H1 (cell line): ENCODE measurements at regions of chr12 and their contacts with region 1.

Region 1: DNA sequence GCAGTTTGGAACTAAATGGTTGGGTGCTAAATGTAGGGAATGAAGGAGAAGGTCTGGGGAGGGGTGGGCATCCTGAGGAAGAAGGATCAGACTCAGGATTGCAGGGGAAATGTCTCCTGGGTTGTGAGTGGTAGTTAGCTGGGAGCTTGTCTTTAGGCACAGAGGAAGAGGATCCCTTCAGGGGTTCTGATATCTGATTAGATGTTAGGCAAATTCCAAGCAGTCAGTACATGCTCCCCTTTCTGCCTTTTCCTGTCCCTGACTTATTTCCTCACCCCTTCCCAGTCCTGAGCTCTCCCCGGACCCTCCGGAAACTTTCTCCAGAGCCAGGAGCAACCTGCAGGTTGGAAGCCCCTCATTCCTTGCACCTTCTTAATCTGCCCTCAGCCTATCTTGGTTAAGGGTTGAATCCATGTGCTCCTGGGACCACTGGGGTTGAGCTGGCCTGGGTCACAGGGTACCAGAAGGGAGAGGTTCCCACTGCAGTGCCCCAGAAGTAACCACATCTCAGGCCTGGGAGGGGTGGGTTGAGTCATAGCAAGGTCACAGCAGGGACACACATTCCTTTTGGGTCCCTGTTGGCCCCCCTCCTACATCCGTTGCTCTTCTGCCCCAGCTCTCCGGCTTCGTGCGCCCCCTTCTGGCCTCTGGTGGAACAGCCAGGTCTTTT is 1.6 kb downstream of the IGFBP6 start:
- DNase-seq: peak; percentile 65 to 97
- H3K4me3 ChIP-seq: peak overlapping the region in 2 of 4 experiments; percentile 5 to 85; a peak in 3 of 8 replicates
- H3K27ac ChIP-seq: no peak overlapping the region
- H3K4me1 ChIP-seq: peaks cover 4 to 21% (median 7%) of the 10 kb centered on the region in 4 experiments
- H3K27me3 ChIP-seq: peaks cover 0 to 25% (median 15%) of the 10 kb centered on the region in 4 experiments; a peak in 5 of 7 replicates
- CTCF ChIP-seq: peak; percentile 82 to 87 (median 86)
- EP300 ChIP-seq: no peak
- POLR2A ChIP-seq: no peak
- RAD21 ChIP-seq: peak; percentile 79 to 81

Region 2: DNA sequence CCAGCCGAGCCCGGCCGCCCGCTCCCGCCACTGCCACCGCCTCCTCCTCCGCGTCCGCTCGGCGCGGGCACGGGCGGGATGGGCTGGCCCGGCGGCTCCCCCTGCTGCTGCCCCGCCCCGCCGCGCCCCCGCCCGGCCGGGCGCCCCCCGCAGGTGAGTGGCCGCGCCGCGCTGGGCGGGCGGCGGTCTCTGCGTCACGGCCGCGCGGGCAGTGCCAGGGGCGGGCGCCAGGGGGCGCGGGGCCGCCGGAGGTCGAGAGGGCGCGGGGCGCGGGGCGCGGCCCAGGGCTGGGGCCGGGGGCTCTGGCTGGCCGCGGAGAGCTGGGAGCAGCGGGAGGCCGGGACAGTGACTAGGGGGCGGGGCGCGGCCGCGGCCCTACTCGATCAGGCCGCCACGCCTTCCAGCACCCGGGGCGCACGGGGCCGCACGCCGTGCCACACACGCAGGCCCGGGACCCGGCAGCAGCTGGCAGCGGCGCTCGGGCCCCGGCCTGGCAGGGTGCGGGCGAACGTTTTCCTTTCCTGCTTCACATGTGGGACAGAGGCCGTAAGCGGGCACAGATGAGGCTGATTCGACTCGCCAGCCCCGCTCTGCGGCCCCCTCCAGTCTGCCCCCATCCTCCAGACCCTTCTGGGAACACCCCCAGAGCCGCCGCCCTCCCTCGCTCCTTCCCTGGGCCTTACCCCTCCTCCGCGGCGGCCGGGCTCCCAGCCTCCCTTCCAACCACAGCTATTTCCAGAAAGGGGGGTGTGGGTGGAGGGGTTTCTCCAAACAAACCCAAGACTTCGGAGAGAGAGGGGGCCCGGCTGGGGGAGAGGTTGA is 51.7 kb before region 1 on chr12:
- CTCF ChIA-PET with region 1: interaction called, 42 read pairs
- POLR2A ChIA-PET with region 1: interaction called, 5 read pairs
- DNase-seq: peak in 1 of 2 experiments; percentile 83
- H3K4me3 ChIP-seq: peak overlapping the region; percentile 34 to 94 (median 50); a peak in 6 of 8 replicates
- H3K27ac ChIP-seq: no peak overlapping the region
- H3K4me1 ChIP-seq: peaks cover 29 to 75% (median 53%) of the 10 kb centered on the region in 4 experiments
- H3K27me3 ChIP-seq: peaks cover 0 to 20% (median 17%) of the 10 kb centered on the region in 4 experiments; a peak in 6 of 7 replicates
- CTCF ChIP-seq: peak in 2 of 3 experiments; percentile 20 to 48; a peak in 3 of 4 replicates
- EP300 ChIP-seq: no peak
- POLR2A ChIP-seq: no peak
- RAD21 ChIP-seq: 0 out of 4 replicates have a peak, but pooled peaks of 1 of the 2 experiments have one; percentile 6

Region 3: DNA sequence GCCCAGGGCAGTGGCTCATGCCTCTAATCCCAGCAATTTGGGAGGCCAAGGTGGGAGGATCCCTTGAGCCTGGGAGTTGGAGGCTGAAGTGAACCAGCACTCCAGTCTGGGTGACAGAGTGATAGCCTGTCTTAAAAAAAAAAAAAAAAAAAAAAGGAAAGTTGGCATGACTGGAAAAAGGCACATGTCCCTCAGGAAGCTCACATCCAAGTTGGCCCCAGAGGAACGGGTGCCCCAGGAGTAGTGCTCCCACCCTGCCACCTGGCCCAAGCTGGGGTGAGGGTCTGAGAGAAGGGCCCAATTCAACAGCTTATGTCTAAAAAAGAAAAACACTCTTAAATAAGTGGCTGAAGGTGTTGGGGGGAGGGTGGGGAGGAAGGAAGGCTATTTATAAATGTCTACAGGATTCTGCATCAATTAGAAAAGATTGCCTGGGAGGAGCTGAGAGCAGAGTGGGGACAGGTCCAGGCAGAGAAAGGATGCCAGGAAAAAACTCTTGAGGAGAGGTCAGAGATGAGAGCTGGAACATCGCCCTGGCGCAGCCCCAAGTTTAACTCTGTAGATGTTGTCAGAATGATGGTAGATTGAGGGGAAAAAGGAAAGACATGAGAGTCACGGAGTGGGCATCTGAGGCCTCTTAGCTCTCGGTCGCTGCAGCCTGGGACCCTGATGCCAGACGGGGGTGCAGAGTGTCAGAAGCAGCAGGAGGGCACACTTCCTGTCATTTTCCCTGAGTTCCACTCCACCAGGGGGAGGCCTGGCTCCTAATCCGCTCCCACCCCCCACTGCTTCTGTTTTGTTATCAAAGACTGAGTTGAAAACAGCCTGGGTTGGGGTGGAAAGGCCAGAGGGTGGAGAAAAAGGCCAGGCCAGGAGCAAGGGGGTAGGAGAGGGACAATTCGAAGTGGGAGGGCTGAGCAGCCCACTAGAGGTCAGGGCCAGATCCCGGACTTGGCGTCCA is 27.2 kb before region 1 on chr12:
- CTCF ChIA-PET with region 1: interaction called, 531 read pairs
- POLR2A ChIA-PET with region 1: interaction called, 11 read pairs
- DNase-seq: no peak
- H3K4me3 ChIP-seq: no peak overlapping the region
- H3K27ac ChIP-seq: no peak overlapping the region
- H3K4me1 ChIP-seq: peaks cover 4 to 16% (median 10%) of the 10 kb centered on the region in 4 experiments
- H3K27me3 ChIP-seq: peaks cover 0 to 2% (median under 1%) of the 10 kb centered on the region in 4 experiments; a peak in 2 of 7 replicates
- CTCF ChIP-seq: peak in 2 of 3 experiments; percentile 7 to 9; a peak in 1 of 4 replicates
- EP300 ChIP-seq: no peak
- POLR2A ChIP-seq: no peak
- RAD21 ChIP-seq: peak in 1 of 2 experiments; percentile 10; a peak in 1 of 4 replicates

Region 4: GRCh38 chr12:53086361-53086760 is 12.8 kb before region 1 on chr12:
- CTCF ChIA-PET with region 1: interaction called, 531 read pairs
- POLR2A ChIA-PET with region 1: interaction called, 21 read pairs
- DNase-seq: no peak
- H3K4me3 ChIP-seq: no peak overlapping the region
- H3K27ac ChIP-seq: no peak overlapping the region
- H3K4me1 ChIP-seq: no peaks in the 10 kb centered on the region
- H3K27me3 ChIP-seq: no peaks in the 10 kb centered on the region; a peak in 2 of 7 replicates
- CTCF ChIP-seq: no peak
- EP300 ChIP-seq: no peak
- POLR2A ChIP-seq: no peak
- RAD21 ChIP-seq: no peak

Region 5: GRCh38 chr12:53129170-53129569 is 30.1 kb after region 1 on chr12:
- CTCF ChIA-PET with region 1: interaction called, 10 read pairs
- POLR2A ChIA-PET with region 1: interaction called, 3 read pairs
- DNase-seq: no peak
- H3K4me3 ChIP-seq: no peak overlapping the region
- H3K27ac ChIP-seq: no peak overlapping the region
- H3K4me1 ChIP-seq: no peaks in the 10 kb centered on the region
- H3K27me3 ChIP-seq: no peaks in the 10 kb centered on the region
- CTCF ChIP-seq: no peak
- EP300 ChIP-seq: no peak
- POLR2A ChIP-seq: no peak
- RAD21 ChIP-seq: no peak

Region 6: GRCh38 chr12:53234271-53234914 is 135.3 kb after region 1 on chr12:
- CTCF ChIA-PET with region 1: no interaction called
- POLR2A ChIA-PET with region 1: no interaction called
- DNase-seq: peak in 1 of 2 experiments; percentile 82
- H3K4me3 ChIP-seq: peak overlapping the region in 3 of 4 experiments; percentile 26 to 59 (median 36); a peak in 6 of 8 replicates
- H3K27ac ChIP-seq: 0 out of 2 replicates have a peak overlapping the region, but pooled peaks have one; percentile 40
- H3K4me1 ChIP-seq: peaks cover 31 to 62% (median 46%) of the 10 kb centered on the region in 4 experiments
- H3K27me3 ChIP-seq: no peaks in the 10 kb centered on the region
- CTCF ChIP-seq: no peak
- EP300 ChIP-seq: no peak
- POLR2A ChIP-seq: no peak
- RAD21 ChIP-seq: no peak

Region 7: DNA sequence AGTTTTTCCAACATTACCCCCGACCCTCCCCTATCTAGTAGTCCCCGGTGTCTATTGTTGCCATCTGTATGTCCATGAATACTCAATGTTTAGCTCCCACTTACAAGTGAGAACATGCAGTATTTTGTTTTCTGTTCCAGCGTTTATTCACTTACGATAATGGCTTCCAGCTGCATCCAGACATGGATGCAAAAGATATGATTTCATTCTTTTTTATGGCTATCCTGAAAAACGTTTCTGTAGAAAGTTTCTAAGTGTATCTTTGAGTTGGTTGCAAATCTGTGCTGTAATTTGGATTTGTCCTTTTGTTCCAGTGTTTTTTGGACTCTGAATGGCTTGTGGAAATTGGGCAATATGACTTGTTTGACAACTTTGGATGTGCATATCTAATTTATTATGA is 292.6 kb after region 1 on chr12:
- CTCF ChIA-PET with region 1: no interaction called
- POLR2A ChIA-PET with region 1: no interaction called
- DNase-seq: no peak
- H3K4me3 ChIP-seq: no peak overlapping the region
- H3K27ac ChIP-seq: no peak overlapping the region
- H3K4me1 ChIP-seq: no peaks in the 10 kb centered on the region
- H3K27me3 ChIP-seq: no peaks in the 10 kb centered on the region
- CTCF ChIP-seq: no peak
- EP300 ChIP-seq: no peak
- POLR2A ChIP-seq: no peak
- RAD21 ChIP-seq: no peak